ENCODE measurements at regions of chr1 and their contacts with region 1.

Region 1: GRCh38 chr1:179293340-179294327 is at the start of gene SOAT1:
- DNase-seq: peak; percentile 95 to 96
- H3K4me3 ChIP-seq: peak within 1 kb of the TSS; percentile 47
- H3K4me3 Mint-ChIP-seq: peak within 1 kb of the TSS; percentile 99
- H3K27ac Mint-ChIP-seq: peak within 1 kb of the TSS; percentile 99
- H3K4me1 ChIP-seq: peaks cover 39% of the 10 kb centered on the region
- H3K4me1 Mint-ChIP-seq: peaks cover 40% of the 10 kb centered on the region
- H3K27me3 ChIP-seq: no peaks in the 10 kb centered on the region
- H3K27me3 Mint-ChIP-seq: no peaks in the 10 kb centered on the region
- CTCF ChIP-seq: peak in 1 of 2 experiments; percentile 25
- total RNA-seq, gene SOAT1: 36.9 and 43.0 TPM in 2 replicates

Region 2: GRCh38 chr1:179025125-179025974 is 268.3 kb before region 1 on chr1 and contains the start of gene FAM20B:
- CTCF ChIA-PET with region 1: no interaction called
- POLR2A ChIA-PET with region 1: no interaction called
- intact Hi-C with region 1: loop called (anchors 5 kb)
- DNase-seq: peak; percentile 96 to 97
- H3K4me3 ChIP-seq: peak within 1 kb of the TSS; percentile 62
- H3K4me3 Mint-ChIP-seq: peak within 1 kb of the TSS; percentile 99
- H3K27ac Mint-ChIP-seq: peak within 1 kb of the TSS; percentile 90
- H3K4me1 ChIP-seq: peaks cover 43% of the 10 kb centered on the region
- H3K4me1 Mint-ChIP-seq: peaks cover 39% of the 10 kb centered on the region
- H3K27me3 ChIP-seq: no peaks in the 10 kb centered on the region
- H3K27me3 Mint-ChIP-seq: no peaks in the 10 kb centered on the region
- CTCF ChIP-seq: no peak
- total RNA-seq, gene FAM20B: 24.5 and 26.1 TPM in 2 replicates

Region 3: GRCh38 chr1:179121159-179121938 is 172.3 kb before region 1 on chr1:
- CTCF ChIA-PET with region 1: interaction called, 4 read pairs
- POLR2A ChIA-PET with region 1: no interaction called
- intact Hi-C with region 1: loop called (anchors 1 kb)
- DNase-seq: peak in 1 of 2 experiments; percentile 53
- H3K4me3 ChIP-seq: no peak overlapping the region
- H3K4me3 Mint-ChIP-seq: no peak overlapping the region
- H3K27ac Mint-ChIP-seq: no peak overlapping the region
- H3K4me1 ChIP-seq: no peaks in the 10 kb centered on the region
- H3K4me1 Mint-ChIP-seq: no peaks in the 10 kb centered on the region
- H3K27me3 ChIP-seq: no peaks in the 10 kb centered on the region
- H3K27me3 Mint-ChIP-seq: no peaks in the 10 kb centered on the region
- CTCF ChIP-seq: peak; percentile 66 to 77

Region 4: DNA sequence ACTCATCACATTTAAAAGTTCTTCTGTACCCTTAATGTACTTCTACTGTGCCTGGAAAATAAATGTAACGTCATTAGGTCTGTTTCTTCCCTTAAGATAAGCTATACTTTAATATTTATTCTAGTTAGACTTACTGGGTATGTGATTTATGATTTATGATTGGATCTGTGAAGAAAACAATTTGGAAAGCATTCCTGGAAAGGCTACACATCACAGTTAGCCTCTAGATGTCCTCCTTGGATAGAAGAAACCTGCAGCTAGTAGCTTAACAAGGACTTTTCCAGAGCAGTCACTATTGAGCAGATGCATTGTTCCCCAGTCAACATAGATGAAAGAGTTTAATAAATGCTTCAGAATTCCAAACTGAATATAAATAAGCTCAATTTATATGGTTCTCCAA is 42.0 kb before region 1 on chr1:
- CTCF ChIA-PET with region 1: interaction called, 25 read pairs
- POLR2A ChIA-PET with region 1: interaction called, 8 read pairs
- intact Hi-C with region 1: loop called (anchors 1 kb)
- DNase-seq: peak in 1 of 2 experiments; percentile 52
- H3K4me3 ChIP-seq: no peak overlapping the region
- H3K4me3 Mint-ChIP-seq: no peak overlapping the region
- H3K27ac Mint-ChIP-seq: no peak overlapping the region
- H3K4me1 ChIP-seq: no peaks in the 10 kb centered on the region
- H3K4me1 Mint-ChIP-seq: no peaks in the 10 kb centered on the region
- H3K27me3 ChIP-seq: no peaks in the 10 kb centered on the region
- H3K27me3 Mint-ChIP-seq: no peaks in the 10 kb centered on the region
- CTCF ChIP-seq: peak; percentile 61 to 65

Region 5: GRCh38 chr1:179327679-179328078 is 34.0 kb after region 1 on chr1:
- CTCF ChIA-PET with region 1: no interaction called
- POLR2A ChIA-PET with region 1: no interaction called
- intact Hi-C with region 1: no loop called
- DNase-seq: no peak
- H3K4me3 ChIP-seq: no peak overlapping the region
- H3K4me3 Mint-ChIP-seq: no peak overlapping the region
- H3K27ac Mint-ChIP-seq: no peak overlapping the region
- H3K4me1 ChIP-seq: peaks cover 14% of the 10 kb centered on the region
- H3K4me1 Mint-ChIP-seq: peaks cover 19% of the 10 kb centered on the region
- H3K27me3 ChIP-seq: no peaks in the 10 kb centered on the region
- H3K27me3 Mint-ChIP-seq: no peaks in the 10 kb centered on the region
- CTCF ChIP-seq: no peak

Region 6: GRCh38 chr1:179599623-179600249 is 306.1 kb after region 1 on chr1:
- CTCF ChIA-PET with region 1: no interaction called
- POLR2A ChIA-PET with region 1: no interaction called
- intact Hi-C with region 1: loop called (anchors 1 kb)
- DNase-seq: peak in 1 of 2 experiments; percentile 60
- H3K4me3 ChIP-seq: no peak overlapping the region
- H3K4me3 Mint-ChIP-seq: no peak overlapping the region
- H3K27ac Mint-ChIP-seq: no peak overlapping the region
- H3K4me1 ChIP-seq: no peaks in the 10 kb centered on the region
- H3K4me1 Mint-ChIP-seq: peaks cover 7% of the 10 kb centered on the region
- H3K27me3 ChIP-seq: no peaks in the 10 kb centered on the region
- H3K27me3 Mint-ChIP-seq: peaks cover 9% of the 10 kb centered on the region
- CTCF ChIP-seq: peak; percentile 50 to 53